ENCODE measurements at regions of chr15 and their contacts with region 1.

Region 1: DNA sequence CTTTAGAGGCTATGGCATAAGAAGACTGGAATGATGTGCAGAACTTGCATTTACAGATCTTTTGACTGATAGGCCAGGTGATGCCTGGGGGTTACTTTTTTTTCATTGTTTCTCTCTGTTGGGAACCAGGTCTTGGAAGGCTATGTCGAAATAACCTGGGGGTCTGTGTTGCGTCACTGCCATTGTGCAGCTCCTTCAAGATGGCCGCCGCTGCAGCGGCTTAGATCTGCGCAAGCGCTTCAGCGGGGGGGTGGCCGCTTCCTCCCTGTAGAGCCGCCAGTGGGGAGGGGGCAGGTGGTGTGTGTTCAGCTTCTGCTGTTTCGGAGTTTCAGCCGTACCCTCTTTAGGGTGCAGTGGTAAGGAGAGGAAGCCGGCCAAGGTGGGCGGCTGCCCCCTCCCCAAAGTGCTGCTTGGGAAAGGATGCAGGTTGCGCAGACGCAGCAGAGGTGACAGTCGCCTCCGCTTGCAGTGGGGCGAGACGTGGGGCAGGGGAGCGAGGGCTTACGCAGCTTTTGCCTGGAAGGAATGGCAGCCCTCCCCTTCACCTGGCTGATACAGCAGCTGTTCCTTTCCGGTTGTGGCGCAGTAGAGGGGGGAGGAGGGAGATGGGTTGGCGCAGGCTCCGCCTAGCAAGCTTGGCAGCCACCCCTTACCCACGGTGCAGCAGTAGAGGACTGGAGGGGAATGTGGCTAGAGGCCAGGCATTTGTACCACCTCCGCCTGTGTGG is 1.5 kb downstream of the SNRPN start:
- DNase-seq: peak; percentile 88
- ATAC-seq: peak; percentile 83
- H3K4me3 Mint-ChIP-seq: peak overlapping the region; percentile 91
- H3K27ac Mint-ChIP-seq: peak overlapping the region; percentile 94
- H3K4me1 Mint-ChIP-seq: peaks cover 11% of the 10 kb centered on the region
- H3K27me3 Mint-ChIP-seq: no peaks in the 10 kb centered on the region

Region 2: GRCh38 chr15:24772686-24773373 is 183.4 kb before region 1 on chr15:
- CTCF ChIA-PET with region 1: no interaction called
- POLR2A ChIA-PET with region 1: no interaction called
- intact Hi-C with region 1: loop called in 1 of 2 experiments (anchors 1 kb)
- DNase-seq: peak; percentile 84
- ATAC-seq: peak; percentile 92
- H3K4me3 Mint-ChIP-seq: peak overlapping the region; percentile 73
- H3K27ac Mint-ChIP-seq: peak overlapping the region; percentile 88
- H3K4me1 Mint-ChIP-seq: peaks cover 3% of the 10 kb centered on the region
- H3K27me3 Mint-ChIP-seq: peaks cover 9% of the 10 kb centered on the region

Region 3: GRCh38 chr15:26082221-26083109 is 1126.2 kb after region 1 on chr15:
- CTCF ChIA-PET with region 1: no interaction called
- POLR2A ChIA-PET with region 1: interaction called, 4 read pairs
- intact Hi-C with region 1: loop called in 1 of 2 experiments (anchors 5 kb)
- DNase-seq: peak; percentile 97
- ATAC-seq: peak; percentile 99
- H3K4me3 Mint-ChIP-seq: peak overlapping the region; percentile 84
- H3K27ac Mint-ChIP-seq: peak overlapping the region; percentile 95
- H3K4me1 Mint-ChIP-seq: peaks cover 32% of the 10 kb centered on the region
- H3K27me3 Mint-ChIP-seq: no peaks in the 10 kb centered on the region

Measured in activated CD4-positive, alpha-beta T cell treated with anti-CD3 and anti-CD28 coated beads for 36 hours (primary cell).